ENCODE measurements at regions of chr2 and their contacts with region 1.

Region 1: DNA sequence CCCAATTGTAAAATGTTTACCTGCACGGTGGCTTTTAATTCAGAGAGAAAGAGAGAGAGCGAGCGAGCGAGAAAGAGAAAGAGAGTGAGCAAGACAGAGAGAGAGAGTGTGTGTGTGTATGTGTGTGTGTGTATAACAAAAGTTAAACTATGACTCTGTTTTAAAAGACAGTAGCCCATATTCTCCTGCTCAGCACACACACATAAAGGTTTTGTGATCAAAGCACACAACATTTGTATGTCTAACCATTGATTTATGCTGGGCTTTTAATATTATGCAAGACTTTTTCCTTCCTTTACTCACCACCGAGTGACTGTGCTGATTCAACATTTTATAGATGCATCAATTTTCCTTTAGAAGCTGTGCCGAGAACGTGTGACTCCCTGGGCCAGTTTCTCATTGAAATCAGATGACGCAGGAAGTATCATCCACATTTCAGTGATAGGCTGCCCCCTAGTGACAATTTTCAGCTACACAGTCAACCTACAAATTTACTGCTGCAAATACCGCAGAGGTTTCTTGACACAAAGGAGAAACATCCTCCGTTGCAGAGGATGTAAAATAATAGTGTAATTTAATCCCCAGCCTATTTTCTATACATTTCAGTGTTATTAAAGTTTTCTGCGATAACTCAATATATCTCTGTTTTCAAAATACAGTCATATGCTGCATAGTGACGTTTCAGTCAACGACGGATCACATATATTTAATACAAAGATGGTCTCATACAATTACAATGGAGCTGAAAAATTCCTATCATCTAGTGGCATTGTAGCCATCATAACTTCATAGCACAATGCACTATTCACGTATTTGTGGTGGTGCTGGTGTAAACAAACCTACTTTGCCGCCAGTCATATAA is 165.9 kb upstream of the TANK start:
- DNase-seq: peak; percentile 40 to 79
- ATAC-seq: peak; percentile 92 to 97
- H3K4me3 ChIP-seq: no peak overlapping the region
- H3K27ac ChIP-seq: peak overlapping the region; percentile 9 to 73; a peak in 4 of 6 replicates
- H3K4me1 ChIP-seq: peaks cover 3% of the 10 kb centered on the region; the same call in 1 of the 3 replicates
- CTCF ChIP-seq: peak; percentile 89
- EP300 ChIP-seq: no peak
- POLR2A ChIP-seq: no peak
- RAD21 ChIP-seq: peak; percentile 93 to 96

Region 2: GRCh38 chr2:160087854-160088745 is 906.3 kb before region 1 on chr2:
- CTCF ChIA-PET with region 1: interaction called, 33 read pairs
- POLR2A ChIA-PET with region 1: no interaction called
- DNase-seq: peak; percentile 35 to 62
- ATAC-seq: peak; percentile 92 to 93
- H3K4me3 ChIP-seq: no peak overlapping the region
- H3K27ac ChIP-seq: peak overlapping the region; percentile 0 to 67; a peak in 3 of 6 replicates
- H3K4me1 ChIP-seq: peaks cover 10% of the 10 kb centered on the region
- CTCF ChIP-seq: peak; percentile 86
- EP300 ChIP-seq: no peak
- POLR2A ChIP-seq: no peak
- RAD21 ChIP-seq: peak; percentile 90 to 92

Region 3: GRCh38 chr2:160269803-160270570 is 724.4 kb before region 1 on chr2:
- CTCF ChIA-PET with region 1: interaction called, 10 read pairs
- POLR2A ChIA-PET with region 1: interaction called, 3 read pairs
- DNase-seq: peak; percentile 83 to 92
- ATAC-seq: peak; percentile 91
- H3K4me3 ChIP-seq: peak overlapping the region; percentile 39
- H3K27ac ChIP-seq: peak overlapping the region; percentile 94 to 96
- H3K4me1 ChIP-seq: peaks cover 74% of the 10 kb centered on the region
- CTCF ChIP-seq: peak; percentile 43
- EP300 ChIP-seq: peak in 1 of 2 experiments; percentile 51; a peak in 1 of 5 replicates
- POLR2A ChIP-seq: no peak
- RAD21 ChIP-seq: peak; percentile 44 to 73

Region 4: GRCh38 chr2:160324161-160324800 is 670.1 kb before region 1 on chr2:
- CTCF ChIA-PET with region 1: interaction called, 27 read pairs
- POLR2A ChIA-PET with region 1: no interaction called
- DNase-seq: peak; percentile 15 to 64
- ATAC-seq: peak in 1 of 2 experiments; percentile 71; a peak in 3 of 6 replicates
- H3K4me3 ChIP-seq: no peak overlapping the region
- H3K27ac ChIP-seq: peak overlapping the region in 1 of 2 experiments; percentile 29; a peak in 1 of 6 replicates
- H3K4me1 ChIP-seq: peaks cover 92% of the 10 kb centered on the region
- CTCF ChIP-seq: peak; percentile 79
- EP300 ChIP-seq: no peak
- POLR2A ChIP-seq: no peak
- RAD21 ChIP-seq: peak; percentile 71 to 76

Region 5: DNA sequence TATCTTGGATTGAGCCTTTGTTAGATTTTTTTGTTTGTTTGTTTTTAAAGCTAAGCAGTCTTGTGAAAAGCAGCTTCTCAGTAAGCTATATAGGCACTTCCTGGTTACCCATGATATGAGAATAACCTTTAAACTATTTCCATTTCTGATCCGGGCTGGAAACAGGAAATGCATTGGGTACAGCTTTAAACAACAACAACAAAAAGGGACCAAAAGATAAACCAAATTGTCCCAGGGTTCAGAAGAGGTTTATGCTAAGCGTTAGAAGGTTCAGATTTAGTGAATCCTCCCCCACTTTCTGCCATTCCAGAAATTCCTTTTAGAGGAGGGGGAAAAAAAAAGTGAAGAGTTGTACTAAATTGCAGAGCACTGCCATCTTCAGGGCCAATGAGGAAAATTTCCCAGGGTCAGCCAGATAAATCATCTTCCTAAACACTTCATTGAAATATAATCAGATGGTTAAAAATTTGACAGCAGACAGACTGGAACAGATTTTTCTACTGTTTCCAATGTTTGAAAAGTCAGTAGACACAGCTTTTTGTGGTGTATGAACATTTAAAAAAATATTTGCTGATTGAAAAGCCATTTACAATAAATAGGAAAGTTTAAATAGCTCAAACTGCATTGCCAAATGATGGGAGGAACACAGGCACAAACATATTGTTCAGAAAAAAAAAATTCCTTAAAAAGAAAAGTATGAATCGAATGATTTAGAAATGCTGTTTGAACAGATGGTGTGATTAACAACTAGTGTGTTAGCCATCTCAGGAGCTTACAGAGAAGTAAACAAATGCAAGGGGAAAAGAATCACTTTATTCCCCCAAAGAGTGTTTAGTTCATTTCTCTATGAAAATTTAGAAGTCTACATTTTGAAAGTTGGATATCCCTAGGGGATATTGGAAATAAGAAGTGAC is 24.1 kb before region 1 on chr2:
- CTCF ChIA-PET with region 1: interaction called, 21 read pairs
- POLR2A ChIA-PET with region 1: no interaction called
- DNase-seq: peak; percentile 55 to 85
- ATAC-seq: peak; percentile 93 to 94
- H3K4me3 ChIP-seq: peak overlapping the region; percentile 29; the same call in 2 of the 3 replicates
- H3K27ac ChIP-seq: peak overlapping the region; percentile 91
- H3K4me1 ChIP-seq: peaks cover 9% of the 10 kb centered on the region; the same call in 1 of the 3 replicates
- CTCF ChIP-seq: peak; percentile 91
- EP300 ChIP-seq: no peak
- POLR2A ChIP-seq: no peak
- RAD21 ChIP-seq: peak; percentile 94 to 98

Region 6: GRCh38 chr2:160977376-160977775 is 17.0 kb before region 1 on chr2:
- CTCF ChIA-PET with region 1: interaction called, 15 read pairs
- POLR2A ChIA-PET with region 1: no interaction called
- DNase-seq: no peak
- ATAC-seq: no peak
- H3K4me3 ChIP-seq: no peak overlapping the region
- H3K27ac ChIP-seq: no peak overlapping the region
- H3K4me1 ChIP-seq: no peaks in the 10 kb centered on the region
- CTCF ChIP-seq: no peak
- EP300 ChIP-seq: no peak
- POLR2A ChIP-seq: no peak
- RAD21 ChIP-seq: no peak

Region 7: GRCh38 chr2:161004379-161004778 is 10.0 kb after region 1 on chr2:
- CTCF ChIA-PET with region 1: interaction called, 26 read pairs
- POLR2A ChIA-PET with region 1: no interaction called
- DNase-seq: peak; percentile 5 to 24
- ATAC-seq: peak in 1 of 2 experiments; percentile 65; a peak in 3 of 6 replicates
- H3K4me3 ChIP-seq: no peak overlapping the region
- H3K27ac ChIP-seq: no peak overlapping the region
- H3K4me1 ChIP-seq: no peaks in the 10 kb centered on the region
- CTCF ChIP-seq: peak; percentile 47
- EP300 ChIP-seq: no peak
- POLR2A ChIP-seq: no peak
- RAD21 ChIP-seq: peak; percentile 54 to 59